ENCODE measurements at regions of chr1 and their contacts with region 1.

Region 1: DNA sequence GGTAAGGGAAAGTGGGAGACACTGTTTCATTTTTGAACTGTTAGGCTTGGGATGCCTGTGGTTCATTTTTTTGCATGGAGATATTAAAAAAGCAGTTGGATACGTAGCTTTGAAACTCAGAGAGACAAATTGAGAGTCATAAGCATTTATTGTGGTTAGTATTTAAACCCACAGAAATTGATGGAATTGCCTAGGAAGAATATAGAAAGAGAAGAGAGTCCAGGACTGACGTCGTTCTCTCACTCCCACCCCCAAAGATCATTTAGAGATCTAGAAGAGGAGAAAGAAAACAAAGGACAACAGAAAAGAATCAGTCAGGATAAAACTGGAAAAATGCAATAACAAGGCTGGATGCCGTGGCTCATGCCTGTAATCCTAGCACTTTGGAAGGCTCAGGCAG is 73.2 kb upstream of the BMP8A start:
- DNase-seq: no peak

Region 2: DNA sequence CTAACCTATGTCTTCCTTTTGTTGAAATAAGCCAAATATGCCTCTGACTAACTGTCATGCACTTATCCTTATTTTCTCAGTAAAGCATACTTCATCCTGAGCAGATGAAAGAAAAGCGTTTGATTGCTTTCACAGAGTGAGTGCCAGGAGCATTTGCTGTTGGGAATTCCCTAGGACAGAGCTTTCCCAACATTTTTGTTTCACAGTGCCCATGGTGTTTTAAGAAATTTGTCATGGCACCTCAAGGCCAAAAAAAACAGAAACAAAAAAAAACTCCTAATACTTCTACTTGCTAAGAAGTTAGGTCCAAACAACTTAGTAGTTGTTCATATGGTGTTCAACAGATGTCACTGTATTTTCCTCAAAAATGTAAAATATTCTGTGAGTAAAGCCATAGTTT is 47.6 kb before region 1 on chr1:
- intact Hi-C with region 1: no loop called
- DNase-seq: no peak

Region 3: DNA sequence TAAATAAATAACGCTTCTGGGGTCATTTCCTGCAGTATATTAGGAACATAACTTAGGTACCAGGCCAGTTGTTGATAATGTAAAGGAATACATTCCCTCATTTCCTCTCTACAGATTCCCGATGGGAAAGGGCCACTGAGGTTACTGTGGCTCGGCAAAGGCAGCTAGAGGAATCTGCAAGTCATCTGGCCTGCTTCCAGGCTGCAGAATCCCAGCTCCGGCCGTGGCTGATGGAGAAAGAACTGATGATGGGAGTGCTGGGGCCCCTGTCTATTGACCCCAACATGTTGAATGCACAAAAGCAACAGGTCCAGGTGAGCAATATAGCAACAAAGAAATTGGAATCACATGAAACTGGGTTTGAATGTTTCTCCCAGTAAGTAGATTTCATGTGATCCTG is 36.4 kb before region 1 on chr1:
- intact Hi-C with region 1: loop called (anchors 5 kb)
- DNase-seq: no peak

Region 4: DNA sequence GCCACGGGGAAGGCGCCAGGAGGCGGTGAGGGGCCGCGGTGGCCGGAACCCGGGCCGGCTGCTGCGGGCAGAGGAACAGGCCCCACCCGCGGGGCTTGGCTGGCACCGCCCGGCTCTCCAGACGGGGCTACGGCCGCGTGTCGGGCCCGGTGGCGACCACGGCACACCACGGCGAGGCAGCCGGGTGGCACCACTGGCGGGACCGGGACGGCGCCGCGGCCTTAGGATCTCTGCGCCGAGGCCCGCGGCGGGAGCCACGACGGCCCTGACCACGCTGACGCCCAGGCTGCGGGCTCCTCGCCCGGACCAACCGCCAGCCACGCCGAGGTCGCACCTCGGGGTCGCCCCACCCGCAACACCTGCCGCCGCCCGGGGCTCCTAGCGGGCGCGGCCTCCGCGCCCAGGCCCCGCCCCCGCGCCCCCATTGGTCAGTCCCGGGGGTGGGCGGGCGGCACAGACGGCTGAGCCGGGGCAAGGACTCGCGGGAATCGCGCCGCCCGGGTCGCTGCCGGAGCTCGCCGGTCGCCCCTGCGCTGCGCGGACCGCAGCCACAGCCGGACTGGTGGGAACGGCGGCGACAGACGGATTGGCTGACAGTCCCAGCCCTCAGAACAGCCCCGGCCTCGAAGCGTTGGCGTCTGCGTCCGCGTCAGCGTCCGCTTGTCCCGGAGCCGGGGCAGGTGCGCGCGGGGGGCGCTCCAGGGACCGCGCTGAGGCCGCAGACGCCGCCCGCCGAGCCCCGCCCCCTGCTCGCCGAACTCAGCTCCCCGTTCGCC is 73.1 kb after region 1 on chr1 and contains the start of gene BMP8A:
- intact Hi-C with region 1: no loop called
- DNase-seq: no peak
- total RNA-seq, gene BMP8A: 1.5 TPM

Measured in cardiac septum (tissue), 1 donor.